CD4-positive, alpha-beta T cell (primary cell): ENCODE measurements at regions of chr1 and their contacts with region 1.

Region 1: GRCh38 chr1:156319664-156320063 is 18.4 kb downstream of the CCT3 start:
- DNase-seq: peak in 4 of 14 experiments; percentile 25 to 52 (median 39)
- ATAC-seq: no peak
- H3K4me3 ChIP-seq: no peak overlapping the region
- H3K4me3 Mint-ChIP-seq: no peak overlapping the region
- H3K27ac ChIP-seq: no peak overlapping the region
- H3K27ac Mint-ChIP-seq: no peak overlapping the region
- H3K4me1 ChIP-seq: no peaks in the 10 kb centered on the region
- H3K4me1 Mint-ChIP-seq: no peaks in the 10 kb centered on the region
- H3K27me3 ChIP-seq: no peaks in the 10 kb centered on the region
- H3K27me3 Mint-ChIP-seq: no peaks in the 10 kb centered on the region
- CTCF ChIP-seq: peak; percentile 56

Region 2: GRCh38 chr1:156140879-156141252 is 178.8 kb before region 1 on chr1:
- CTCF ChIA-PET with region 1: no interaction called
- POLR2A ChIA-PET with region 1: no interaction called
- intact Hi-C with region 1: loop called (anchors 1 to 5 kb)
- DNase-seq: no peak
- ATAC-seq: peak; percentile 1
- H3K4me3 ChIP-seq: no peak overlapping the region
- H3K4me3 Mint-ChIP-seq: peak overlapping the region; percentile 25
- H3K27ac ChIP-seq: no peak overlapping the region
- H3K27ac Mint-ChIP-seq: peak overlapping the region; percentile 5
- H3K4me1 ChIP-seq: peaks cover 2% of the 10 kb centered on the region
- H3K4me1 Mint-ChIP-seq: peaks cover 2% of the 10 kb centered on the region
- H3K27me3 ChIP-seq: no peaks in the 10 kb centered on the region
- H3K27me3 Mint-ChIP-seq: peaks cover under 1% of the 10 kb centered on the region
- CTCF ChIP-seq: no peak

Region 3: GRCh38 chr1:156146020-156146768 is 173.5 kb before region 1 on chr1:
- CTCF ChIA-PET with region 1: no interaction called
- POLR2A ChIA-PET with region 1: no interaction called
- intact Hi-C with region 1: loop called (anchors 1 to 5 kb)
- DNase-seq: peak in 8 of 14 experiments; percentile 25 to 83 (median 47)
- ATAC-seq: peak; percentile 76
- H3K4me3 ChIP-seq: no peak overlapping the region
- H3K4me3 Mint-ChIP-seq: peak overlapping the region; percentile 60
- H3K27ac ChIP-seq: no peak overlapping the region
- H3K27ac Mint-ChIP-seq: peak overlapping the region; percentile 71
- H3K4me1 ChIP-seq: peaks cover 30% of the 10 kb centered on the region
- H3K4me1 Mint-ChIP-seq: peaks cover 24% of the 10 kb centered on the region
- H3K27me3 ChIP-seq: no peaks in the 10 kb centered on the region
- H3K27me3 Mint-ChIP-seq: peaks cover 5% of the 10 kb centered on the region
- CTCF ChIP-seq: peak; percentile 73